Thyroid gland (tissue), 4 donors: ENCODE measurements at regions of chr5 and their contacts with region 1.

Region 1: DNA sequence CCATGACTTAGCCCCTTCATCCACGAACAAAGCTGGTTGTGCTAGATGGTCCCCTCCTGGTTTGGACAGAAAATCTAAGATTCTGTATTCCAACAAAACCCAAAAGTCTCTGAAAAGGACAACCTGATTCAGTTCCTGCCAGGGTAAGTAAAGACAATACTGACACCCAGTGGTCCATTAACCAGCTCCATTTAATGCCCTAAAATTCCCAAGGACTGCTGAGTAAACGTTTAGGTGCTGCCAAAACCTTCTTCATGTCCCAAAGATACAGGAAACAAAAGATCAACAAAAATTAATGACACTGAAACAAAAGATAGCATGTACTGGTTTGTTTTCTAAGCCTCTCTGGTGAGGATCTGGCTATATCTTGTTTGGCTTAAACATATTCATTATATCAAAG is 25.3 kb upstream of the PPP1R2B start:
- DNase-seq: peak; percentile 8 to 14
- H3K4me3 ChIP-seq: no peak overlapping the region
- H3K27ac ChIP-seq: no peak overlapping the region
- H3K4me1 ChIP-seq: no peaks in the 10 kb centered on the region
- H3K27me3 ChIP-seq: no peaks in the 10 kb centered on the region
- CTCF ChIP-seq: peak in 5 of 6 experiments; percentile 31 to 87 (median 59)
- POLR2A ChIP-seq: no peak

Region 2: GRCh38 chr5:155147222-155147621 is 1677.6 kb before region 1 on chr5:
- intact Hi-C with region 1: loop called (anchors 10 kb)
- DNase-seq: no peak
- H3K4me3 ChIP-seq: no peak overlapping the region
- H3K27ac ChIP-seq: no peak overlapping the region
- H3K4me1 ChIP-seq: no peaks in the 10 kb centered on the region
- H3K27me3 ChIP-seq: no peaks in the 10 kb centered on the region
- CTCF ChIP-seq: peak in 1 of 6 experiments; percentile 14
- POLR2A ChIP-seq: no peak

Region 3: DNA sequence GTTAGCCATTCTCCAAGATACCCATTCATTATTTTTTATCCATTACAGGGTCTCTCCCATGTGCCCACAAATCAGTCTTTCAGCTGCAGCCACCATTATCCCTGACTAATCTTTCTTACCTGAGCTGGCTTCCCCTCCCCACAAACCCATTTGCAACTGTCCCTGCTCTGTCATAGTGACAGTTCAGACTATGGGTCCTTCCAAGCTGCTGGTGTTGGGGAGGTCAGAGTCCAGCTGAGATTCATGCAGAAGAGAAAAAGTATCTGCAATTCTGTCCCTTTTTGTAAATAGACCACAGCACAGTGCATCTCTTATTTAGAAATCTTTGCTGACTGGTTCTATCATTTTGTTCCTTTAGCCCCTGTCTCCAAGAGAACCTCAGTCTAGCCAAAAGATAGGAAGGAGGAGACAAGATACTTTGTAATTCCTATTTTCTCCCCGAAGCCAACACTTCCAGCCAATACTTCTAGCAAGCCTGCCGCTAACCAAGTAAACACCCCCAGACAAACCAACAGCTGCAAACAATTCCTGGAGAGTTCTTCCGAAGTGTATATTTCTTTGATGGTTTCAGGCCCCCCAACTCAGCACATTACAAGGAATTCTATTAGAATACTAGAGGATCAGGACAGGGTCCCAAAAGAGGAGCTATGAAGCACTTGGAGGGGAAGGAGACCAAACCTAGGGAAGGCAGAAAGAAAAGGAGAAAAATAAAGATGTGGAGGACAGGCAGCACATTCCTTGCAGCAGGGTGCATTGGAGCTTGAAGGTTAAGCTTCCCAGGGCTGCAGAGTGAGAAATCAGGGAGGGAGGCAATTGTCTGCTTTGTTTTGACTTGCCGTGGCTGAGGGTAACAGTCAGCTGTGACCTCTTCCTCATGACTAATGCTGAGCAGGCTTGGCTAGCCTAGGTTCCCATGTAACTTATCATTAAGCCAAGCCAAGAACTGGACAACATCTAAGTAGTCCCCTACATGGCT is 349.3 kb before region 1 on chr5:
- intact Hi-C with region 1: no loop called
- DNase-seq: peak; percentile 78 to 84
- H3K4me3 ChIP-seq: no peak overlapping the region
- H3K27ac ChIP-seq: peak overlapping the region; percentile 66 to 88 (median 66)
- H3K4me1 ChIP-seq: peaks cover 39 to 47% of the 10 kb centered on the region in 2 donors
- H3K27me3 ChIP-seq: no peaks in the 10 kb centered on the region
- CTCF ChIP-seq: no peak
- POLR2A ChIP-seq: no peak

Region 4: DNA sequence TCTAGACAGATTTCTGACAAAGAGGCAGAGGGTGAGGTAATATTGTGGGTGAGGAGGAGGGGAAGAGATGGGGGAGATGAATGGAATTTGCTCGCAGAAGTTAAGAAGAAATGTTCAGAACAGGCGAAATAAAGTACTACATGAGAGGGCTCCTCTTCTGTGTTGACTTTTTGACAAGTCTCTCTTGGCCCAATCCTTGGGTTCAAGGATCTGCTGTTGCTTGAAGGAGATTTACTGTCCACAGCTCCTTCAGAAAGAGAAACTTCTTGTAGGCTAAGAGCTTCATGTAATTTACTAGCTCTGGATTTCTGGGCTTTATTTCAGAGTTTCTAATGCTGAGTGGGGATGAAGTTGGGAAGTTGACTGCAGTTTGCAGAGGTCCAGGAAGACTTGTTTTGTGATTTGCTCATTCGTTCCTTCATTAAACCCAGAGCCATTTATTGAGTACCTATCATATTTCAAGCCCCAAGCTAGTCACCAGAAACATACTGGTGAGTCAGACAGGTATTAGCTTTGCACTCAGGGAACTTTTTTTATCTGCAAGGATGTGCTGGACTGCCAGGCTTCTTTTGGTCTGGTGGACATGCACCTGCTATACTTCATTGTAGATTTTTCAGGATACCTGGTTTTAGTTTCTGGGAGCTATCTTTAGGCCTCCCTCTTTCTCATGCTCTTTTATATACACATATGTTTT is 1437.0 kb after region 1 on chr5:
- intact Hi-C with region 1: no loop called
- DNase-seq: no peak
- H3K4me3 ChIP-seq: no peak overlapping the region
- H3K27ac ChIP-seq: no peak overlapping the region
- H3K4me1 ChIP-seq: no peaks in the 10 kb centered on the region
- H3K27me3 ChIP-seq: no peaks in the 10 kb centered on the region
- CTCF ChIP-seq: no peak
- POLR2A ChIP-seq: no peak